ENCODE measurements at regions of chr6 and their contacts with region 1.

Region 1: GRCh38 chr6:63598049-63599036 is 26.1 kb downstream of the LOC128125822 start:
- DNase-seq: peak; percentile 71
- ATAC-seq: peak; percentile 97
- H3K4me3 Mint-ChIP-seq: peak overlapping the region; percentile 80
- H3K27ac Mint-ChIP-seq: peak overlapping the region; percentile 75
- H3K4me1 Mint-ChIP-seq: peaks cover 9% of the 10 kb centered on the region
- H3K27me3 Mint-ChIP-seq: no peaks in the 10 kb centered on the region; the same call in 1 of the 2 replicates
- CTCF ChIP-seq: peak; percentile 71

Region 2: DNA sequence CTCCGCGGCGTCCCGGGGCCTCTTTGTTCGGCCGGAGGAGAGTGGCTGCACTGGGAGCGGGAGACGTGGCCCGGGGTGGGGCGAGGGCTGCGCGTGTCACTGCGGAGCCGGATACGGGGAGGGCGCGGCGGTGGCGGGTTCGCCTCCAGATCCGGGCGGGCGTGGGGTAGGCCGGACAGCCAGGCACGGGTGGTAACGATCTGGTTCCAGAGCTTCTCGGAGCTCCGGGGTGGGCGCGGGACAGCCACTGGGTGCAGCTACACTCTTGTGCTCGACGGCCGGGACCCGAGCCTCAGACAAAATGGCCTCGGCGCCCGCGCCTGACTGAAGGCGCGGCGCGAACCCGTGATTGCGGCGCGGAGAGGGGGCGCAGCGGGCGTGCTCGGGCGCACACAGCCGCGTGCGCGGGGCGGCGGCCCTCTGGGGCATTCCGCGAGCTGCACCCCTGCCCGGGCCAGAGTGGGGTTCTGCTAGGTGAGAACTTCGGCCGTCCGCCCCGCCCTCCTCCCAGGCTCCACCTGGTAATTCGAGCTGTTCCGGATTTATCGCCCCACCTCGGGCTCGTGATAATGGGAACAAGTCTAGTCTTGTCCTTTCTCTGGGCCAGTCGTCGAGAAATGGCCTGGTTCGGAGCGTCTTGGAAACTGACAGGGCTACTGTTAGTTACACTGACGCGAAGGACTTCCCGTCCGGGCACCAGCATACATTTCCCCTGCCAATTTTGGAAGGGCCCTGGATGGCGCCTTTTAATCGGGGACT is 25.0 kb before region 1 on chr6:
- CTCF ChIA-PET with region 1: interaction called, 16 read pairs
- POLR2A ChIA-PET with region 1: interaction called, 17 read pairs
- DNase-seq: peak; percentile 90
- ATAC-seq: peak; percentile 70
- H3K4me3 Mint-ChIP-seq: peak overlapping the region; percentile 94
- H3K27ac Mint-ChIP-seq: peak overlapping the region; percentile 99
- H3K4me1 Mint-ChIP-seq: peaks cover 30% of the 10 kb centered on the region
- H3K27me3 Mint-ChIP-seq: peaks cover 22% of the 10 kb centered on the region; the same call in 1 of the 2 replicates
- CTCF ChIP-seq: no peak

Region 3: DNA sequence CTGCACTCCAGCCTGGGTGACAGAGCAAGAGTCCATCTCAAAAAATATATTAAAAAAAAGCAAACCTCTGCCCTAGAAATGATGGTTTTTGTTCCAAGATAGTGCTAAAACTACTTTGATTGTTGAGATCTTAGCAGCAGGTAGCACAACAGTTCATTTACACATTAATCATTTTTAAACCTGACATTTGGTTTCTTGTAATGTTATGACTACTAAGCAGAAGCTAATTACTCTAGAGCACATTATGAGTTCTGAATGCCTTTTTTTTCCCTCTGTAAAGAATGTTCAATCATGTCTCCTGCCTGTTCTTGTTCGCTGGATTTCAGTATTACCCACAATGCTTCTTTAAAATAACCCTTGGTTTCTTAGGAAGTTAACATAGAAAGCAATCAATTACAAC is 12.6 kb after region 1 on chr6:
- CTCF ChIA-PET with region 1: interaction called, 10 read pairs
- POLR2A ChIA-PET with region 1: no interaction called
- DNase-seq: no peak
- ATAC-seq: no peak
- H3K4me3 Mint-ChIP-seq: no peak overlapping the region
- H3K27ac Mint-ChIP-seq: no peak overlapping the region
- H3K4me1 Mint-ChIP-seq: no peaks in the 10 kb centered on the region
- H3K27me3 Mint-ChIP-seq: peaks cover 3% of the 10 kb centered on the region; the same call in 1 of the 2 replicates
- CTCF ChIP-seq: no peak

Region 4: DNA sequence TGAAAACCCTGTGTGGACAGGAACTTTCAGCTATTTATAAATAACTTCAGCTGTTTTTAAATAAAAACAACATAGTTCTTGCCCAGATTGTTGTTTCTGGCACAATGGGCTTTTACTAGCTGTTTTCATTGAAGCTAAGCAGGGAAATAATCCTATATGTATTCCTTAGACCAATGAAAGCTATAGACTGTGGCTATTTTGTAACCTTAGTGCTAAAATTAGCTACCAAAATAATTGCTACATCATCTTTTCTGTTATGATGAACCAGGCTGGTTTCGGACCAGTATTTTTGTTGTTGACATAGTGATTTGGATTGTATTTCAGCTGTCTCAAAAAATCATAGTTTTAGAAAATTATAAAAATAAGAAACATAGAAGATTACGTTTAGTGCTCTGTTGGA is 50.9 kb after region 1 on chr6:
- CTCF ChIA-PET with region 1: interaction called, 11 read pairs
- POLR2A ChIA-PET with region 1: no interaction called
- DNase-seq: no peak
- ATAC-seq: no peak
- H3K4me3 Mint-ChIP-seq: no peak overlapping the region
- H3K27ac Mint-ChIP-seq: no peak overlapping the region
- H3K4me1 Mint-ChIP-seq: peaks cover 35% of the 10 kb centered on the region
- H3K27me3 Mint-ChIP-seq: no peaks in the 10 kb centered on the region
- CTCF ChIP-seq: no peak

Region 5: DNA sequence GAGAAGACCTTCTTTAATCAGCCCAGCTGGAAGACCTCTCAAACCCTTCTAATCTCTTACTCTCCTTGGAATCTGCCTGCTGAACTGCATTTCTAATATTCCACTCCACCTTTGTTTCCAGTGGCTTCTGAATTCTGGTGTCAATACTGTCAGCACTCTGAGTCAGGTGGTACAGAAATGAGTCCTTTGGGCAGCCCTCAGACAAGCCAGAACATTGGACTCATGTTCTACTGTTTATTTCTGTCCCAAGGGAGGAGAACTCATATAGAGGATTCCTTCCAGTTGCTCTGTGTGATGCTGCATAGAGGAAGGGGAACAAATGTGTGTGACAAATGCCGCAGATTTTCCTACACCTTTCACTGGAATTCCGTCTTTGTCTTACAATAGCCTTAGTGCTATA is 152.1 kb after region 1 on chr6:
- CTCF ChIA-PET with region 1: no interaction called
- POLR2A ChIA-PET with region 1: no interaction called
- DNase-seq: no peak
- ATAC-seq: no peak
- H3K4me3 Mint-ChIP-seq: no peak overlapping the region
- H3K27ac Mint-ChIP-seq: no peak overlapping the region
- H3K4me1 Mint-ChIP-seq: peaks cover 8% of the 10 kb centered on the region
- H3K27me3 Mint-ChIP-seq: peaks cover 4% of the 10 kb centered on the region; the same call in 1 of the 2 replicates
- CTCF ChIP-seq: no peak

Region 6: GRCh38 chr6:63802606-63803206 is 204.4 kb after region 1 on chr6:
- CTCF ChIA-PET with region 1: interaction called, 16 read pairs
- POLR2A ChIA-PET with region 1: no interaction called
- DNase-seq: no peak
- ATAC-seq: no peak
- H3K4me3 Mint-ChIP-seq: no peak overlapping the region
- H3K27ac Mint-ChIP-seq: no peak overlapping the region
- H3K4me1 Mint-ChIP-seq: peaks cover 13% of the 10 kb centered on the region
- H3K27me3 Mint-ChIP-seq: no peaks in the 10 kb centered on the region; the same call in 1 of the 2 replicates
- CTCF ChIP-seq: no peak